ENCODE measurements at regions of chr7 and their contacts with region 1.

Region 1: DNA sequence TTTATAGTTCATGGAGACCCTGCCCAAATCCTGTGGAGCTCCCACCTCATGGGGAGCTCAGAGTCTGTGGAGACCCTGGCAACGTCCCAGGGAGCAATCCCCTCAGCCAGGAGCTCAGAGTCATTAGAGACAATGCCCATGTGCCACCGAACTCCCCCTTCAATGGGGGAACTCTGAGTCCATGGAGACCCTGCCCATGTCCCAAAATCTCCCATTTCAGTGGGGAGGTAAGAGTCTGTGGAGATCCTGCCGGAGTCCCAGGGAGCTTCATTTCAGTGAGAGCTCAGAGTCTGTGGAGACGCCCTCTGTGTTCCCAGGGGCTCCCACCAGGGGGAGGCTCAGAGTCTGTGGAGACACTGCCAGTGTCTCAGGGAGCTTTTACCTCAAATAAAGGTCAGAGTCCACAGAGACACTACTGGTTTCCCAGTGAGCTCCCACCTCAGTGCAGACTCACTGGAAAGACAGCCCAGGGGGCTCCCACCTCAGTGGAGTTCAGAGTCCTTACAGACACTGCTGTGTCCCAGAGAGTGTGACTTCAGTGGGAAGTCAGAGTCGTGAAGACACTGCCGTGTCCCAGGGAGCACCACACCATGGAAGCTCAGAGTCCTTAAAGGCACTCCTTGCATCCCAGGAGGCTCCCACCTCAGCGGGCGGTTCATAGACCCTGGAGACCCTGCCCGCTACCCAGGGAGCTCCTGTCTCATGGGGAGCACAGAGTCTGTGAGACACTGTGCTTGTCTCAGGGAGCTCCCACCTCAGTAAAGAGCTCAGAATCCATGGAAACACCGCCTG is 5.0 kb downstream of the MYO1G start:
- DNase-seq: peak; percentile 70
- ATAC-seq: peak; percentile 15
- H3K4me3 Mint-ChIP-seq: peak overlapping the region; percentile 100
- H3K27ac Mint-ChIP-seq: peak overlapping the region; percentile 100
- H3K4me1 Mint-ChIP-seq: peaks cover 31% of the 10 kb centered on the region
- H3K27me3 Mint-ChIP-seq: no peaks in the 10 kb centered on the region
- CTCF ChIP-seq: peak; percentile 55

Region 2: GRCh38 chr7:44847508-44847920 is 126.3 kb before region 1 on chr7:
- CTCF ChIA-PET with region 1: interaction called, 3 read pairs
- POLR2A ChIA-PET with region 1: interaction called, 13 read pairs
- intact Hi-C with region 1: no loop called
- DNase-seq: peak; percentile 88
- ATAC-seq: peak; percentile 69
- H3K4me3 Mint-ChIP-seq: peak overlapping the region; percentile 92
- H3K27ac Mint-ChIP-seq: peak overlapping the region; percentile 100
- H3K4me1 Mint-ChIP-seq: peaks cover 36% of the 10 kb centered on the region
- H3K27me3 Mint-ChIP-seq: no peaks in the 10 kb centered on the region
- CTCF ChIP-seq: peak; percentile 85

Region 3: GRCh38 chr7:44897309-44897708 is 76.5 kb before region 1 on chr7:
- CTCF ChIA-PET with region 1: no interaction called
- POLR2A ChIA-PET with region 1: no interaction called
- intact Hi-C with region 1: no loop called
- DNase-seq: no peak
- ATAC-seq: peak; percentile 28
- H3K4me3 Mint-ChIP-seq: no peak overlapping the region
- H3K27ac Mint-ChIP-seq: peak overlapping the region; percentile 32
- H3K4me1 Mint-ChIP-seq: peaks cover 16% of the 10 kb centered on the region
- H3K27me3 Mint-ChIP-seq: no peaks in the 10 kb centered on the region
- CTCF ChIP-seq: no peak

Region 4: DNA sequence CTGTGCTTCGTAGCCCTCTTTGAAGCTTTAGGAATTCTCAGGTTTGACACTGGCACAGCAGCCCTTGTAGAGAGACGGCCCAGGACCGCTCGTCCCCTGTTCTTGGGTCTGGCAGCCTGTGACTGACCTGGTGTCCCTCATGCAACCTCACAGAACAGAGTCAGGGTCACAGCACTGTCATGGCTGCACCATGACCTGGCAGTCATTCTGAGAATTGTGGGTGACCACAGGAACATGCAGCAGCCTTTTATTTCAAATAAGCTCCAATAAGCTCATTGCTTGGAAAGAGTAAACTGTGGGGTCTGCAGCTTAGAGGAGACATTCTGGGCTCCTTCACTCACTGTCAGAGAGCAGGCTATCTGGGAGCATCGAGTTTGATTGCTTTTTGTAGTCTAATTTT is 37.5 kb before region 1 on chr7:
- CTCF ChIA-PET with region 1: interaction called, 13 read pairs
- POLR2A ChIA-PET with region 1: no interaction called
- intact Hi-C with region 1: no loop called
- DNase-seq: no peak
- ATAC-seq: no peak
- H3K4me3 Mint-ChIP-seq: no peak overlapping the region
- H3K27ac Mint-ChIP-seq: no peak overlapping the region
- H3K4me1 Mint-ChIP-seq: no peaks in the 10 kb centered on the region
- H3K27me3 Mint-ChIP-seq: peaks cover 2% of the 10 kb centered on the region
- CTCF ChIP-seq: no peak

Region 5: GRCh38 chr7:44962483-44963251 is 11.1 kb before region 1 on chr7:
- CTCF ChIA-PET with region 1: interaction called, 19 read pairs
- POLR2A ChIA-PET with region 1: interaction called, 317 read pairs
- intact Hi-C with region 1: no loop called
- DNase-seq: peak; percentile 28
- ATAC-seq: no peak
- H3K4me3 Mint-ChIP-seq: no peak overlapping the region
- H3K27ac Mint-ChIP-seq: no peak overlapping the region
- H3K4me1 Mint-ChIP-seq: peaks cover 19% of the 10 kb centered on the region
- H3K27me3 Mint-ChIP-seq: no peaks in the 10 kb centered on the region
- CTCF ChIP-seq: no peak

Region 6: GRCh38 chr7:44999245-45000095 is 25.7 kb after region 1 on chr7:
- CTCF ChIA-PET with region 1: interaction called, 23 read pairs
- POLR2A ChIA-PET with region 1: interaction called, 328 read pairs
- intact Hi-C with region 1: no loop called
- DNase-seq: peak; percentile 100
- ATAC-seq: peak; percentile 90
- H3K4me3 Mint-ChIP-seq: peak overlapping the region; percentile 83
- H3K27ac Mint-ChIP-seq: peak overlapping the region; percentile 93
- H3K4me1 Mint-ChIP-seq: peaks cover 54% of the 10 kb centered on the region
- H3K27me3 Mint-ChIP-seq: no peaks in the 10 kb centered on the region
- CTCF ChIP-seq: no peak

Region 7: GRCh38 chr7:45111298-45112223 is 137.8 kb after region 1 on chr7 and contains the start of gene TBRG4:
- CTCF ChIA-PET with region 1: interaction called, 13 read pairs
- POLR2A ChIA-PET with region 1: interaction called, 5 read pairs
- intact Hi-C with region 1: no loop called
- DNase-seq: peak; percentile 97
- ATAC-seq: peak; percentile 94
- H3K4me3 Mint-ChIP-seq: peak within 1 kb of the TSS; percentile 90
- H3K27ac Mint-ChIP-seq: peak within 1 kb of the TSS; percentile 95
- H3K4me1 Mint-ChIP-seq: peaks cover 32% of the 10 kb centered on the region
- H3K27me3 Mint-ChIP-seq: no peaks in the 10 kb centered on the region
- CTCF ChIP-seq: no peak
- total RNA-seq, gene TBRG4: 197 TPM